ENCODE measurements at regions of chr1 and their contacts with region 1.

Region 1: DNA sequence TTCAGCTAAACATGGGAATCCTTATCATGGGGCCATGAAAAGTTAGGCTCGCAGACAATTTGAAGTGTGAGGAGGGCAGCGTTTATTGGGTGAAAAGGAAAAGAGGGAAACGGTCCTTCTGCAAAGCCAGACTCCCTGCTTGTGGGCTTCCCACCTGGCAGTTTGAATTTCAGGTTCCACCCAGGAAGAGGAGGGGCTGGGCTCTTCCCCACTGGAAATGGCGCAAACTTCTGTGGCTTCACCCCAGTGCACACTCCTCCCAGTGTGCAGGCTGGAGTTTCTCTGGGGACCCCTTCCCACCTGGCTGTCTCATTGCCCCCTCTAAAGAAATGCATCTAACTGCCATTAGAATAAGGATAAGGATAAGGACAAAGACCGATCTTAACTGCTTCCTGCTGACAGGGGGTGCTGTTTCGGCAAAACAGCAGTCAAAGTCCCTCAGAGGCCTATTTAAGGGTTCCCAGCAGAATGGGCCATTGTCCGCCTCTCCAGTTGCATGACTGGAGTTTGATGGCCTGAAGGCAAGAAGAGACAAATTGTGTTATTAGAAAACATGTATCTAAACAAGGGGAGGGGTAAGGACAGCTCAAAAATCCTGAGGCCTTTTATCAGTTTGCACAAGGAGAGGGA is 20.4 kb downstream of the AIM2 start:
- DNase-seq: no peak
- ATAC-seq: no peak
- H3K4me3 Mint-ChIP-seq: no peak overlapping the region
- H3K27ac Mint-ChIP-seq: peak overlapping the region; percentile 84
- H3K4me1 Mint-ChIP-seq: peaks cover 89% of the 10 kb centered on the region
- H3K27me3 Mint-ChIP-seq: no peaks in the 10 kb centered on the region
- CTCF ChIP-seq: no peak

Region 2: GRCh38 chr1:158998781-158999161 is 57.4 kb before region 1 on chr1:
- CTCF ChIA-PET with region 1: no interaction called
- POLR2A ChIA-PET with region 1: no interaction called
- intact Hi-C with region 1: no loop called
- DNase-seq: no peak
- ATAC-seq: peak; percentile 83
- H3K4me3 Mint-ChIP-seq: no peak overlapping the region
- H3K27ac Mint-ChIP-seq: no peak overlapping the region
- H3K4me1 Mint-ChIP-seq: peaks cover 20% of the 10 kb centered on the region
- H3K27me3 Mint-ChIP-seq: no peaks in the 10 kb centered on the region
- CTCF ChIP-seq: peak; percentile 59

Region 3: DNA sequence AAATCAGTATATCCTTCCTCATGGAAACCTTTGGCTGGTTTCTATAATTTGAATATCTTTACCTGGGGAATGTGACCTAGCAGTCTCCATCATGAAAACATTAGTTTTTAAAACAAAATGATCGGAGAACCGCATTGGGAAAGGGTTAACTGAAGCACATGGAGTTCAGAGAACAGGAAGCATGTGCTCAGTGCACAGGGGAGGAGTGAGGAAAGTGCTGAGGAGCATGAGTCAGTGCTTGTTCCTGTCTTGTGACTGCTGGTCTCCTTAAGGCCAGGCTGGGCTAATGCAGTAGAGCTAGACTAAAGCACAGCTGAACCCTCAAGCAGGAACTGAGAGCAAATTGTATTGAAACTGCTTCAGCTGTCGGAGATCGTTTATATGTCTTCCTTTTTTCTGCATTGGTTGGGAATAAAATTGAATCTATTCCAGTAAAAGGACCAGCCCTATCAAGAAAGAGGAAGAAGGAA is 40.7 kb before region 1 on chr1:
- CTCF ChIA-PET with region 1: no interaction called
- POLR2A ChIA-PET with region 1: interaction called, 3 read pairs
- intact Hi-C with region 1: loop called (anchors 5 kb)
- DNase-seq: peak; percentile 36
- ATAC-seq: peak; percentile 98
- H3K4me3 Mint-ChIP-seq: peak overlapping the region; percentile 83
- H3K27ac Mint-ChIP-seq: peak overlapping the region; percentile 92
- H3K4me1 Mint-ChIP-seq: peaks cover 70% of the 10 kb centered on the region
- H3K27me3 Mint-ChIP-seq: no peaks in the 10 kb centered on the region
- CTCF ChIP-seq: no peak

Region 4: GRCh38 chr1:159077120-159077961 is 21.2 kb after region 1 on chr1:
- CTCF ChIA-PET with region 1: interaction called, 124 read pairs
- POLR2A ChIA-PET with region 1: interaction called, 10 read pairs
- intact Hi-C with region 1: loop called (anchors 1 kb)
- DNase-seq: peak; percentile 71
- ATAC-seq: peak; percentile 73
- H3K4me3 Mint-ChIP-seq: peak overlapping the region; percentile 89
- H3K27ac Mint-ChIP-seq: peak overlapping the region; percentile 94
- H3K4me1 Mint-ChIP-seq: peaks cover 40% of the 10 kb centered on the region
- H3K27me3 Mint-ChIP-seq: no peaks in the 10 kb centered on the region
- CTCF ChIP-seq: no peak

Region 5: DNA sequence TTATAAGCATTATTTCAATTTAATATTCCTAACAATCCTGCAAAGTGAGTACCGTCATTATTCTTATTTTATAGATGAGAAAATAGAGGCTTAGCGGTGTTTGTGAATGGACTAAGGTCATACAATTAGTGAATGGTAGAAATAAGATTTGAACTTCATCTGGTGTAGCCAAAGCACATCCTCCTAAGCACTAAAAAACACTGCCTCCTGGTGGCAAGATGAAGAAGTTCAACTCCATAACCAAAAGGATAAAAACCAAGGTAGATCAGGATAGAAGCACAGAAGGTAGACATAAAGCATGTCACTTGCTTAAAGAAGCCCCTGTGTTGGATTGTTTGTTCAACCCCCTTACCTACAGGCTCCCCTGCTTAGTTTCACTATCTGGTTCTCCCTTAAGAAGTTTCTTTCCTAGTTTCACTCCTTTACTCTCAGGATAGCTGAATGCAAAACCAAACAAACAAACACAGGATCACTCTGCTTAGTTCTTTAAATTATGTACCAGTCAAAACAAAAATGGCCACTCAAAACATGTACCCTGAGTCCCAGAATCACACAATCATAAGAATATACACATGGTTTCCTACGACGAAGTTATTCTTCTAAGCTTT is 33.1 kb after region 1 on chr1:
- CTCF ChIA-PET with region 1: interaction called, 11 read pairs
- POLR2A ChIA-PET with region 1: interaction called, 3 read pairs
- intact Hi-C with region 1: no loop called
- DNase-seq: no peak
- ATAC-seq: peak; percentile 33
- H3K4me3 Mint-ChIP-seq: no peak overlapping the region
- H3K27ac Mint-ChIP-seq: peak overlapping the region; percentile 44
- H3K4me1 Mint-ChIP-seq: peaks cover 23% of the 10 kb centered on the region
- H3K27me3 Mint-ChIP-seq: no peaks in the 10 kb centered on the region
- CTCF ChIP-seq: no peak

Region 6: DNA sequence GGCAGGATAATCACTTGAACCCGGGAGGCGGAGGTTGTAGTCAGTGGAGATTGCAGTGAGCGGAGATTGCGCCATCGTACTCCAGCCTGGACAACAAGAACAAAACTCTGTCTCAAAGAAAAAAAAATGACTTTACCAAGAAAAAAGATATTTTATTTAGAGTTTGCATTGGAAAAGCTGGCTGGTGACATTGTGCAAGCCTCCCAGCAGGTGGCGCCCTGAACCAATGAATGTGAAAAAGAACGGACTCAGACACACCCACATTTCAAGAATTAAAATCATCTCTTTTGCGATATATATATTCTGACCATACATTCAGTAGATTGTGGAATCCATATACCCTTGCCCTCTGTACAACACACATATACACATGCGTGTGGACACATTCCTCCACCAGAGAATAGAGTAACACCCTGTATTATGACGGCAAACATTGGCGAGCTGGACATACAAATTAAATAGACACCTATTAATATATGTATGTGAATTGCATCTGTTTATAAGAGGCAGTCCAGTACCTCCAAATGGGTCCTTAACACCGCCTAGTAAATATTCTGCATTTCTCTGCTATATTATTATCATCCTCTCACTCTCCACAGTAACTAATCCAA is 76.2 kb after region 1 on chr1:
- CTCF ChIA-PET with region 1: interaction called, 3 read pairs
- POLR2A ChIA-PET with region 1: interaction called, 11 read pairs
- intact Hi-C with region 1: no loop called
- DNase-seq: peak; percentile 53
- ATAC-seq: peak; percentile 61
- H3K4me3 Mint-ChIP-seq: no peak overlapping the region
- H3K27ac Mint-ChIP-seq: no peak overlapping the region
- H3K4me1 Mint-ChIP-seq: peaks cover 2% of the 10 kb centered on the region
- H3K27me3 Mint-ChIP-seq: no peaks in the 10 kb centered on the region
- CTCF ChIP-seq: no peak

Measured in activated B cell treated with CpG ODN at 0.5 μM for 24 hours (primary cell).